ENCODE measurements at regions of chr3 and their contacts with region 1.

Region 1: DNA sequence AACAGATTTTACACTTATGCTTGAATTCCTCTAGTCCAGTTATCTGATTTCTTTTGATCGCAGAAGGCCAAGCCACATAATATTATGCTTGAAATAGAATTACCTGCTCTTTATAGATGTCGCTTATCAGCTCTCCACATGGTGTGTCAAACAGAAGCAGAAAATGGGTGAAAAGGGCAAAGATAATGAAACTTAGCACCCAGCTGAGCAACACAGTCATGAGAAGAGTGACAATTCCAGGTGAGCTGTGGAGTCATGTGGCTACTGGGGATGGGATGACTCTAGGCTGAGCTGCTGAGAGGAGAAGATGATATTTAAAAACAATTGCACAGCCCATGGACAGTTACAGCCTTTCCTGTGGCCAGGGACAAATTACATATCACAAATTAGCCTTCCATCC is 398.7 kb upstream of the PDZRN3 start:
- DNase-seq: no peak
- ATAC-seq: no peak
- H3K4me3 Mint-ChIP-seq: no peak overlapping the region
- H3K27ac Mint-ChIP-seq: no peak overlapping the region
- H3K4me1 Mint-ChIP-seq: no peaks in the 10 kb centered on the region
- H3K27me3 Mint-ChIP-seq: no peaks in the 10 kb centered on the region
- CTCF ChIP-seq: no peak

Region 2: DNA sequence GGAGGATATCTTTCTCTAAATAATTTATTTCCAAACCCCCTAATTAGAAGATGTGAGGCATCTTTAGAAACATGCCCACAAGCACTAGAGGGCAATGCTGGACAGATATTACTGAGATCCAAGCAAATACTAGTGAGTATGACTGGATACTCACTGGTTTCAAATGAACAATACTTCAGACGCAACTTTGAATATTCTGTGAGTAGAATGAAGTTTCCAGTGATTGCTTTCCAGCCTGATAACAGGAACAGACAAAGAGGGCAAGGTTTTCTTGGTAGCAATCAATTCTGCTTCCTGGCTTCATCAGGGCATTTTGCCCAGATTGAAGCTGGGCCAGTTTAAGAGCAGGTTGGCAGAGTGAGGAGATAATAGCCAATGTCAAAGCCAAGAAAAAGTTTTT is 43.9 kb after region 1 on chr3:
- CTCF ChIA-PET with region 1: no interaction called
- POLR2A ChIA-PET with region 1: interaction called, 12 read pairs
- intact Hi-C with region 1: no loop called
- DNase-seq: no peak
- ATAC-seq: no peak
- H3K4me3 Mint-ChIP-seq: no peak overlapping the region
- H3K27ac Mint-ChIP-seq: no peak overlapping the region
- H3K4me1 Mint-ChIP-seq: no peaks in the 10 kb centered on the region
- H3K27me3 Mint-ChIP-seq: no peaks in the 10 kb centered on the region
- CTCF ChIP-seq: no peak

Measured in activated B cell treated with CpG ODN at 0.5 μM for 24 hours (primary cell).